Heart left ventricle (tissue), 16 donors: ENCODE measurements at regions of chr7 and their contacts with region 1.

Region 1: GRCh38 chr7:55784151-55784550 is 78.4 kb downstream of the SEPTIN14 start:
- DNase-seq: no peak
- ATAC-seq: no peak
- H3K4me3 ChIP-seq: no peak overlapping the region
- H3K27ac ChIP-seq: no peak overlapping the region
- H3K4me1 ChIP-seq: no peaks in the 10 kb centered on the region
- H3K27me3 ChIP-seq: no peaks in the 10 kb centered on the region
- CTCF ChIP-seq: no peak
- POLR2A ChIP-seq: no peak

Region 2: DNA sequence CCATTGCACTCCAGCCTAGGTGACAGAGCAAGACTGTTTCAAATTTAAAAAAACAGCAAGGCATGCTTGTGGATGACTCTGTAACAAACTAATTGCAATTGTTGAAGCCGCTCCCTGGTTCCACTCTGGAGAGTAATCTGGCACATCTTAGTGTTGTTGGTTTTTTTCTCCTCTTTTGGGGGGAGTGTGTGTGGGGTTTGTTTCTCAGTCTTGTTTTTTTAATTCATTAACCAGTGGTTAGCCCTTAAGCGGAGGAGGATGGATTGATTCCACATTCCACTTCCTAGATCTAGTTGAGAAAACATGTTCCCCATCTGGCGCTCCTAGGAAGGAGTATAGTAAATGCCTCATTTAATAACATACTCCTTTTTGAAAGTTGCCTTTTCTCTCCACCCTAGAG is 94.5 kb after region 1 on chr7:
- intact Hi-C with region 1: loop called in 1 of 10 experiments (anchors 10 kb)
- DNase-seq: no peak
- ATAC-seq: no peak
- H3K4me3 ChIP-seq: no peak overlapping the region
- H3K27ac ChIP-seq: no peak overlapping the region
- H3K4me1 ChIP-seq: no peaks in the 10 kb centered on the region
- H3K27me3 ChIP-seq: no peaks in the 10 kb centered on the region
- CTCF ChIP-seq: no peak
- POLR2A ChIP-seq: no peak

Region 3: DNA sequence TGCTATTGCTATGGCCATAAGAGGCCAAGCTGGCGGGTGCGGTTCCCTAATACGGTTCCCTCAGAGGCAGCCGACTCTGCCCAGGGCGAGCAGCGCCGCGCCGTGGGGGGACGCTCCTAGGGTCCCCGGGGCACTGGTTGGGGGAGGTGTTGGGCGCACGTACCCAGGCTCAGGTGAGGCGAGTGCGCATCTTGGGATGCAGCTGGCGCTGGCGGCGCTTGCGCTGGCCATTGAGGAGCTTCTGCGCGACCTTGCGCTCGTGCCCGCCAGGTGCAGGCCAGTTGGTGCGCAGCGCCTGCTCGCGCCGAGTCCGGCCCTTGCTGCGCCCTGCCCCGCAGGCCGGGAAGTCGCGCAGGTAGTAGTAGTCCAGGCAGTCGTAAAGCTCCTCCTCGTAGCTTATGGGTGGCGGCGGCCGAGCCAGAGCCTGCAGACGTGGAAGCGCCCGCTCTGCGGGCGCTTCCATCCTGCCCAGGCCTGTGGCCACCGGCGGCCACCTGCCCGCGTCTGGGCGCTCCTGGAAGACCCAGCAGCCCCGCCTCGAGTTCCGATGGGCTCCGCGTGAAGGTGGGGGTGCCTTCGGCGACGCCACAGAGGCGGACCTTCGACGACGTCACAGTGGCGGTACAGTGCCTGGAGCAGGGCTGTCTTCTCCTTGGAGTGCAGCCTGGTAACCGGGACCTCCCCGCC is 331.8 kb after region 1 on chr7 and contains the start of gene NUPR2:
- intact Hi-C with region 1: no loop called
- DNase-seq: no peak
- ATAC-seq: no peak
- H3K4me3 ChIP-seq: peak within 1 kb of the TSS in 3 of 12 donors; percentile 6 to 25 (median 10)
- H3K27ac ChIP-seq: no peak within 1 kb of the TSS
- H3K4me1 ChIP-seq: peaks cover 0 to 6% (median 0%) of the 10 kb centered on the region in 12 donors
- H3K27me3 ChIP-seq: peaks cover 8 to 31% (median 10%) of the 10 kb centered on the region in 9 donors
- CTCF ChIP-seq: no peak
- POLR2A ChIP-seq: no peak
- total RNA-seq, gene NUPR2: not detected